Left lung (tissue), 14 donors: ENCODE measurements at regions of chr1 and their contacts with region 1.

Region 1: DNA sequence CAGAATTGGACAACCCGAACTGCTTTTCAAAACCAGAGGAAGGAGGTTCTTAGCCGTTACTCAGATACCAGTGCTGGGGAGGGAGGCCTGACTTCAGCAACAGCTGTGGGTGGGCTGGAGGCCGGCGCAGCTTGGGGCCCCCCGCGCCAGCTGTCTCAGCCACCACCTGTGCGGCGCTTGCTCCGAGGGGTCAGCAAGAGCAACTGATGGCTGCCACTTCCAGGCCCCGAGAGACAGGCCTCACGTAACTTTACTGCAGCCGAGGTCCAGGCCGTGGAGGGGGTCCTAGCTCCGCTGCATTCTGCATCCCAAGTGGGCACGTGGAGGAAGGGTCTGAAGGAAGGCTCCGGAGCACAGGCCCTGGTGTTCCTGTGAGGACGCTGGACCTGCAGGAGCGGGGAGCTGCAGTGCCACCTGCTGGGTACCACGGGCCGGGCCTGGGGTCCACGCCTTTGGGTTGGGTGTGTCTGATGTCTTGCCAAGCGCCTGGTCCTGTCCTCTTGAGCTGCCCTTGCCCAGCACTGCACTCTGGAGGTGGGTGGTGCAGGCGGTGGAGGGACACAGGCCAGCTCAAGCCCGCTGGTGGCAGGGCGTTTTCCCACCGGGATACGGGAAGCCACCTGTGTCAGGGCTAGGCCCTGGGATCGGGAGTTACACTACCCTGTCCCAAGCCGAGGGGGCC is 9.8 kb downstream of the THAP3 start:
- DNase-seq: peak; percentile 16 to 87 (median 48)
- ATAC-seq: peak; percentile 81
- H3K4me3 ChIP-seq: no peak overlapping the region
- H3K27ac ChIP-seq: no peak overlapping the region
- H3K4me1 ChIP-seq: no peaks in the 10 kb centered on the region
- H3K27me3 ChIP-seq: no peaks in the 10 kb centered on the region
- CTCF ChIP-seq: peak; percentile 31 to 34

Region 2: DNA sequence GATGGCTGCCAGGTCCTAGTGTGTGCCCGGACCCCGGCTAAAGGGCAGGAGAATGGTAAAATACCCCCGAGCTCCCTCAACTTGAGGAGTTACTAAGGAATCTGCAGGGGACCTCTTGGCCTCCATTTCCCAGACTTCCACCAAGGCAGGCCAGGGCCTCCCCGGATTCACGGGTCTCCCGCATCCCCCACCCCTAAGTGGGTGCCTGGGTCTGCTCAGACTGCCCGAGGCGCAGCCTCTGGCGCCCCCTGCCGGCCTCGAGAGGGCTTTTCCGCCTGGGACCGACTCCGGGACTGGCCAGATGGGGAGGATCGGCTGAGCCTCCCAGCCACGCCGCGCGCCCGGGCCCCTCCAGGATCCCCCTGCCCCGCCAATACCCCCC is 144.7 kb before region 1 on chr1:
- intact Hi-C with region 1: loop called in 1 of 2 experiments (anchors 10 kb)
- DNase-seq: peak; percentile 47 to 93 (median 76)
- ATAC-seq: peak; percentile 83
- H3K4me3 ChIP-seq: peak overlapping the region; percentile 50
- H3K27ac ChIP-seq: no peak overlapping the region
- H3K4me1 ChIP-seq: peaks cover 11 to 30% of the 10 kb centered on the region in 2 donors
- H3K27me3 ChIP-seq: peaks cover 4 to 55% of the 10 kb centered on the region in 2 donors
- CTCF ChIP-seq: peak; percentile 93

Region 3: GRCh38 chr1:6762060-6762459 is 127.5 kb after region 1 on chr1:
- intact Hi-C with region 1: no loop called
- DNase-seq: no peak
- ATAC-seq: no peak
- H3K4me3 ChIP-seq: no peak overlapping the region
- H3K27ac ChIP-seq: no peak overlapping the region
- H3K4me1 ChIP-seq: no peaks in the 10 kb centered on the region
- H3K27me3 ChIP-seq: peaks cover 0 to 4% of the 10 kb centered on the region in 2 donors
- CTCF ChIP-seq: no peak